ENCODE measurements at regions of chr20 and their contacts with region 1.

Region 1: GRCh38 chr20:34389206-34389953 is 26.3 kb downstream of the ITCH start:
- DNase-seq: no peak
- ATAC-seq: peak; percentile 58
- H3K4me3 ChIP-seq: no peak overlapping the region
- H3K4me1 ChIP-seq: peaks cover 20% of the 10 kb centered on the region
- CTCF ChIP-seq: no peak

Region 2: GRCh38 chr20:34312544-34313217 is 76.7 kb before region 1 on chr20:
- intact Hi-C with region 1: loop called in 1 of 2 experiments (anchors 10 kb)
- DNase-seq: peak; percentile 86 to 94 (median 93)
- ATAC-seq: peak; percentile 92
- H3K4me3 ChIP-seq: no peak overlapping the region
- H3K4me1 ChIP-seq: peaks cover 22% of the 10 kb centered on the region
- CTCF ChIP-seq: peak; percentile 95

Measured in mucosa of descending colon (tissue), 3 donors.